ENCODE measurements at regions of chr17 and their contacts with region 1.

Region 1: GRCh38 chr17:69607162-69607834 is 192.8 kb downstream of the MAP2K6 start:
- DNase-seq: peak; percentile 89
- H3K4me3 ChIP-seq: no peak overlapping the region
- H3K27ac ChIP-seq: peak overlapping the region; percentile 92
- H3K4me1 ChIP-seq: peaks cover 28% of the 10 kb centered on the region
- H3K27me3 ChIP-seq: no peaks in the 10 kb centered on the region
- CTCF ChIP-seq: peak; percentile 71 to 80
- POLR2A ChIP-seq: no peak

Region 2: GRCh38 chr17:69523244-69523861 is 83.9 kb before region 1 on chr17:
- CTCF ChIA-PET with region 1: interaction called, 18 read pairs
- POLR2A ChIA-PET with region 1: no interaction called
- dilution Hi-C with region 1: no loop called
- intact Hi-C with region 1: loop called (anchors 1 kb)
- DNase-seq: peak; percentile 76
- H3K4me3 ChIP-seq: no peak overlapping the region
- H3K27ac ChIP-seq: no peak overlapping the region
- H3K4me1 ChIP-seq: peaks cover 14% of the 10 kb centered on the region
- H3K27me3 ChIP-seq: no peaks in the 10 kb centered on the region
- CTCF ChIP-seq: peak; percentile 68 to 74
- POLR2A ChIP-seq: no peak

Region 3: GRCh38 chr17:69620363-69620762 is 13.1 kb after region 1 on chr17:
- CTCF ChIA-PET with region 1: interaction called, 10 read pairs
- POLR2A ChIA-PET with region 1: no interaction called
- dilution Hi-C with region 1: no loop called
- intact Hi-C with region 1: no loop called
- DNase-seq: no peak
- H3K4me3 ChIP-seq: no peak overlapping the region
- H3K27ac ChIP-seq: no peak overlapping the region
- H3K4me1 ChIP-seq: no peaks in the 10 kb centered on the region
- H3K27me3 ChIP-seq: no peaks in the 10 kb centered on the region
- CTCF ChIP-seq: no peak
- POLR2A ChIP-seq: no peak

Region 4: GRCh38 chr17:69828087-69828486 is 220.8 kb after region 1 on chr17:
- CTCF ChIA-PET with region 1: interaction called, 21 read pairs
- POLR2A ChIA-PET with region 1: no interaction called
- dilution Hi-C with region 1: no loop called
- intact Hi-C with region 1: loop called (anchors 1 kb)
- DNase-seq: peak; percentile 97
- H3K4me3 ChIP-seq: peak overlapping the region in 1 of 3 experiments; percentile 12
- H3K27ac ChIP-seq: peak overlapping the region; percentile 89
- H3K4me1 ChIP-seq: peaks cover 20% of the 10 kb centered on the region
- H3K27me3 ChIP-seq: no peaks in the 10 kb centered on the region
- CTCF ChIP-seq: no peak
- POLR2A ChIP-seq: no peak

Region 5: GRCh38 chr17:70110443-70110880 is 503.2 kb after region 1 on chr17:
- CTCF ChIA-PET with region 1: interaction called, 19 read pairs
- POLR2A ChIA-PET with region 1: no interaction called
- dilution Hi-C with region 1: no loop called
- intact Hi-C with region 1: no loop called
- DNase-seq: peak; percentile 99
- H3K4me3 ChIP-seq: no peak overlapping the region
- H3K27ac ChIP-seq: peak overlapping the region; percentile 82
- H3K4me1 ChIP-seq: peaks cover 27% of the 10 kb centered on the region
- H3K27me3 ChIP-seq: no peaks in the 10 kb centered on the region
- CTCF ChIP-seq: no peak
- POLR2A ChIP-seq: peak; percentile 42

Region 6: DNA sequence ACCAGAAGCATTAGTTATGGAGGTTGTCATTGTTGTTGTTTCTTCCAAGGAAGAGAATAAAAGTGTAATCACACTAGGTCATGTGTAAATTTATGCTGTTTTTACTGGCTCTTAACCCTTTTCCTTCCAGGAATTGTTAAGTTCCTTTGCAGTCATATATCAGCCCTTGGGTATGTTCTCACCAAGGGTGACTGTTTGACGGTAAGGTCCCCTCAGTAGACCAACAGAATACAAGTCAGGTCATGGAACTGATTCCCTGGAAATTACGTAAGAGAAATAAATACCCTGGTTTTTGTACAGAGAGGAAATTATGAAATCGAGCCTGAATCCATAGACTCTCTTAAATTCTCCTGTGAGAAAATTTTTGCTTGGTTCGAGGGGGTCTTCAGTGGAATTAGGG is 550.9 kb after region 1 on chr17:
- CTCF ChIA-PET with region 1: interaction called, 24 read pairs
- POLR2A ChIA-PET with region 1: no interaction called
- dilution Hi-C with region 1: no loop called
- intact Hi-C with region 1: no loop called
- DNase-seq: peak; percentile 97
- H3K4me3 ChIP-seq: peak overlapping the region; percentile 27 to 77 (median 47)
- H3K27ac ChIP-seq: peak overlapping the region; percentile 100
- H3K4me1 ChIP-seq: peaks cover 44% of the 10 kb centered on the region
- H3K27me3 ChIP-seq: no peaks in the 10 kb centered on the region
- CTCF ChIP-seq: no peak
- POLR2A ChIP-seq: no peak

Region 7: GRCh38 chr17:70629902-70630301 is 1022.6 kb after region 1 on chr17:
- CTCF ChIA-PET with region 1: interaction called, 20 read pairs
- POLR2A ChIA-PET with region 1: no interaction called
- dilution Hi-C with region 1: no loop called
- intact Hi-C with region 1: no loop called
- DNase-seq: peak; percentile 44
- H3K4me3 ChIP-seq: no peak overlapping the region
- H3K27ac ChIP-seq: no peak overlapping the region
- H3K4me1 ChIP-seq: no peaks in the 10 kb centered on the region
- H3K27me3 ChIP-seq: peaks cover 4 to 11% of the 10 kb centered on the region in 2 experiments
- CTCF ChIP-seq: peak in 1 of 2 donors; percentile 18
- POLR2A ChIP-seq: no peak